HepG2 (cell line): ENCODE measurements at regions of chr12 and their contacts with region 1.

Region 1: GRCh38 chr12:75526655-75527511 is 15.5 kb upstream of the KRR1 start:
- DNase-seq: peak; percentile 45
- ATAC-seq: peak; percentile 74
- H3K4me3 ChIP-seq: no peak overlapping the region
- H3K27ac ChIP-seq: no peak overlapping the region
- H3K4me1 ChIP-seq: peaks cover 5% of the 10 kb centered on the region; the same call in 1 of the 2 replicates
- H3K27me3 ChIP-seq: no peaks in the 10 kb centered on the region; a peak in 1 of 5 replicates
- CTCF ChIP-seq: peak; percentile 68
- EP300 ChIP-seq: no peak
- POLR2A ChIP-seq: no peak
- RAD21 ChIP-seq: peak; percentile 56

Region 2: DNA sequence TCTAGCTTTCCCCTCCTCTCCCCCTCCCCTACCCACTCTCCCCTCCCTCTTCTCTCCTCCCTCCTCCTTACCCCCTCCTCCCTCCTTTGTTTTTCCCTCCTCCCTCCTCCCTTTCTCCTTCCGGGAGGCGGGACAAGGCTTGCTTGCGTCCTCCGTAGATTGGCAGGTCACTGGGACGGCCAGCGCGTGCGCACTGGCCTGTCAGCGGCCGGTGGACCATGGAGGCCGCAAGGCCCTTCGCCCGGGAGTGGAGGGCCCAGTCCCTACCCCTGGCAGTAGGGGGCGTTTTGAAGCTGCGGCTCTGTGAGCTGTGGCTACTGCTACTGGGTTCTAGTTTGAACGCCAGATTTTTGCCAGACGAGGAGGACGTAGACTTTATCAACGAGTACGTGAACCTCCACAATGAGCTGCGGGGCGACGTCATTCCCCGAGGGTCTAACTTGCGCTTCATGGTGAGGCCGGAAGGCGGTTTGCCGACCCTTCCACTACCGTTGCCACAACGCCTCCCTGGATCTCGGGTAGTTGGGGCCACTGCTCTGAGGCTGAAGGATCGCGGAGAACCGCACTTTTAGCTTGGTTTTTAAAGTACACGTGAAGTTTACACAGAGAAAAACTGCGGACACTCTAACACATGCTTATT is 135.9 kb before region 1 on chr12 and contains the start of gene GLIPR1L2:
- CTCF ChIA-PET with region 1: no interaction called
- POLR2A ChIA-PET with region 1: no interaction called
- in situ Hi-C with region 1: no loop called
- intact Hi-C with region 1: no loop called
- DNase-seq: peak; percentile 10
- ATAC-seq: peak; percentile 100
- H3K4me3 ChIP-seq: peak within 1 kb of the TSS in 2 of 3 experiments; percentile 13 to 37; a peak in 4 of 6 replicates
- H3K27ac ChIP-seq: no peak within 1 kb of the TSS
- H3K4me1 ChIP-seq: no peaks in the 10 kb centered on the region
- H3K27me3 ChIP-seq: no peaks in the 10 kb centered on the region
- CTCF ChIP-seq: peak; percentile 73
- EP300 ChIP-seq: no peak
- POLR2A ChIP-seq: no peak
- RAD21 ChIP-seq: peak; percentile 43; the same call in 1 of the 2 replicates
- total RNA-seq, gene GLIPR1L2: not detected in 2 replicates

Region 3: DNA sequence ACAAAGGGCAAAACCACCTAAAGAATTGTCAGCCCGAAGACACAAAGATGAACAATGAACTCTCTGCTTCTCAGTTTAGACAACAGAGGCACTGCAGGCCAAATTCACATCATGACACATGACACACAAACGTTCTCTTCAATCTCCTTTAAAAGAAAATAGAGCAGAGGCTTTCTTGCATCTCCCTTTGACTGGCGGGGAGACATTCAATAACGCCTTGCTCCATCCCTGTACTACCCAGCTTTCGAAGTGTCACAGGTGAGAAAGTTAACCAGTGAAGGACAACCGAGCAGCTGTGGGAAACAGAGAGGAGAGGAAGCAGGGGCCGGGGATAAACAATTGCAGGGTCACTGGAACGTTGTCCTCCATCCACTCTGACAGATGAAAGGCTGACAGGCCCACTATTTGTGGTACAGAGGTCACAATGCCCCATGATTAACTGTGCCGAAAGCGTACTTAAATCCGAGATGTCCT is 373.9 kb after region 1 on chr12:
- CTCF ChIA-PET with region 1: no interaction called
- POLR2A ChIA-PET with region 1: no interaction called
- in situ Hi-C with region 1: no loop called
- intact Hi-C with region 1: no loop called
- DNase-seq: peak; percentile 94
- ATAC-seq: peak; percentile 100
- H3K4me3 ChIP-seq: peak overlapping the region in 2 of 3 experiments; percentile 1 to 37; a peak in 2 of 6 replicates
- H3K27ac ChIP-seq: peak overlapping the region; percentile 69
- H3K4me1 ChIP-seq: peaks cover 39% of the 10 kb centered on the region
- H3K27me3 ChIP-seq: no peaks in the 10 kb centered on the region
- CTCF ChIP-seq: no peak
- EP300 ChIP-seq: peak; percentile 10 to 90; a peak in 2 of 4 replicates
- POLR2A ChIP-seq: no peak
- RAD21 ChIP-seq: peak; percentile 29; the same call in 1 of the 2 replicates

Region 4: DNA sequence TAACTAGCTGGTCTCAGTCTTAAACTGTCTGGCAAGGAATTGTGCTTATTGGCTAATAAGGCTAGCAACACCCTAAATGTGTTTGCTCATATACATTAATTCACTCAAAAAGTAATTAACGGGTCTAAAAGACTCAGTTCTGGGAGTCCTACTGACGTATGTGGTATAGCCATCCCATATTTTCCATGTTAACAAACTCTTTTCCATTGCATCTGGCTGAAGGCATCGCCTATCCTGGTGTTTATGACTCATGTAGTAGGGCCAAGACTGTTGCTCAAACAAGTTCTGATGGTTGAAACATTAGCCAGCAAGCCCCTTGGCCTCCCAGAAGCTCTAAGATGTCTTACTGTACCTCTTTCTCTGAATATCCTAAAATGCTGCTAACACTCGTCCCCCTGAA is 406.2 kb after region 1 on chr12:
- CTCF ChIA-PET with region 1: no interaction called
- POLR2A ChIA-PET with region 1: no interaction called
- in situ Hi-C with region 1: no loop called
- intact Hi-C with region 1: loop called (anchors 10 kb)
- DNase-seq: no peak
- ATAC-seq: no peak
- H3K4me3 ChIP-seq: no peak overlapping the region
- H3K27ac ChIP-seq: no peak overlapping the region
- H3K4me1 ChIP-seq: peaks cover 69% of the 10 kb centered on the region
- H3K27me3 ChIP-seq: no peaks in the 10 kb centered on the region
- CTCF ChIP-seq: no peak
- EP300 ChIP-seq: peak in 1 of 2 experiments; percentile 4; a peak in 1 of 4 replicates
- POLR2A ChIP-seq: no peak
- RAD21 ChIP-seq: no peak

Region 5: GRCh38 chr12:76037130-76038103 is 510.5 kb after region 1 on chr12:
- CTCF ChIA-PET with region 1: interaction called, 18 read pairs
- POLR2A ChIA-PET with region 1: interaction called, 3 read pairs
- in situ Hi-C with region 1: no loop called
- intact Hi-C with region 1: loop called (anchors 1 kb)
- DNase-seq: peak; percentile 77
- ATAC-seq: peak; percentile 44
- H3K4me3 ChIP-seq: no peak overlapping the region
- H3K27ac ChIP-seq: no peak overlapping the region
- H3K4me1 ChIP-seq: peaks cover 74% of the 10 kb centered on the region
- H3K27me3 ChIP-seq: no peaks in the 10 kb centered on the region; a peak in 1 of 5 replicates
- CTCF ChIP-seq: peak; percentile 83
- EP300 ChIP-seq: no peak
- POLR2A ChIP-seq: no peak
- RAD21 ChIP-seq: peak; percentile 87

Region 6: DNA sequence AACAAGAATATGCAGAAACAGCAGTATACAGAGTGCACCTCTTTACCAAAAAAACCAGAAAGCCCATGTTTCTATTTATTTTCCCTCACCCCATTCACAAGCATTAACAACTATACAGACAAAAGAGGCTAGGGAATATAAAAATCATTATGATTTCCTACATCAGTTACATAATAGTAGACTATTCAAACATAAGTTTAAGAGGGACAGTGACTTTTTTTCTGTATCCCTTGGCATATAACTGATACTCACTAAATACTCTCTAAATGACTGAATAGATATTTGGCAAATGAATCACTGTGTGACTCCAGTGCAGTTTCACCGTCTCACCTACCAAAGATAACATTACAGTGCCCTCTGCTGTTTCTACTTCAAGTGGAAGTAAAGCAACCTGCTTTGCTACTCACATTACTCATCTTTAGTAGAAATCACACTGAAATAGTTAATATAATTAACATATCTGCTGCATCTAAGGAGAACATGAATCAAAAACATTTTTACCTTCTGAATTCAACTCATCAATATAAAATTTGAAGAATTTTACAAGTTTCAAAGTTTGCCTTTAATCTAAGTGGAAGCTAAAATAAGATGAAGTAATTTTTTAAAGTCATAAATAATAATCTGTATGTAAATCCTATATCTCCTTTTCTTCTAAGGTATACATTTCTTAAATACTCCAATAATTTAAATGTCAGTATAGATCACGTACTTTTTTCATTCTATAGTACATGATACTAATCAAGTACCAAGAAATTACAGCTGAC is 928.9 kb after region 1 on chr12:
- CTCF ChIA-PET with region 1: interaction called, 3 read pairs
- POLR2A ChIA-PET with region 1: no interaction called
- in situ Hi-C with region 1: loop called (anchors 25 kb)
- intact Hi-C with region 1: loop called (anchors 10 kb)
- DNase-seq: peak; percentile 62
- ATAC-seq: peak; percentile 90
- H3K4me3 ChIP-seq: no peak overlapping the region
- H3K27ac ChIP-seq: no peak overlapping the region
- H3K4me1 ChIP-seq: peaks cover 12% of the 10 kb centered on the region
- H3K27me3 ChIP-seq: no peaks in the 10 kb centered on the region
- CTCF ChIP-seq: peak; percentile 76
- EP300 ChIP-seq: no peak
- POLR2A ChIP-seq: no peak
- RAD21 ChIP-seq: peak; percentile 43; the same call in 1 of the 2 replicates